A549 (cell line): ENCODE measurements at regions of chr12 and their contacts with region 1.

Region 1: GRCh38 chr12:49069507-49070346 is at the start of gene RHEBL1:
- DNase-seq: peak; percentile 97 to 98
- ATAC-seq: peak; percentile 97 to 99
- H3K4me3 ChIP-seq: peak within 1 kb of the TSS; percentile 55
- H3K27ac ChIP-seq: peak within 1 kb of the TSS; percentile 62 to 85
- H3K4me1 ChIP-seq: peaks cover 7% of the 10 kb centered on the region; the same call in 2 of the 3 replicates
- CTCF ChIP-seq: no peak
- EP300 ChIP-seq: no peak
- POLR2A ChIP-seq: no peak
- RAD21 ChIP-seq: no peak
- polyA plus RNA-seq, gene RHEBL1: 4.0 TPM in 2 replicates

Region 2: DNA sequence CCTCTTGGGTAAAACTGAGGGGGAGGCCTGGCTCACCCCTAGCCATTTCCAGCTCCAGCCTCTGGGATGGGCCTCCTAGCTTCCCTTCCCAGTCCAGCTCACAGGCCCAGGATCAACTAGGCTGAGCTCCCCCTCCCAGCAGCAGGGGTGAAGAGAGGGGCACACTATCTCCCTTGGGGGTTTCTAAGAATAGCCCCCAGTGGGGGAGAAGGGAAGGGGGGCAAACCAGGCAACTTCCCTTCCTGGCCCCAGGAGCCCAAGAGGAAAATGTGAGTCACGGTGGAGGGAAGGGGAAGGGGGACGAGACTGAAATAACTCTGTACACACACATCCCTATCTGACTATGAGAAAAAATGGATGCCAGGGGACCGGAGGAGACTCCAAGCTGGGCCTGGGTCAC is 289.9 kb before region 1 on chr12:
- CTCF ChIA-PET with region 1: no interaction called
- POLR2A ChIA-PET with region 1: no interaction called
- DNase-seq: no peak
- ATAC-seq: no peak
- H3K4me3 ChIP-seq: no peak overlapping the region
- H3K27ac ChIP-seq: no peak overlapping the region
- H3K4me1 ChIP-seq: no peaks in the 10 kb centered on the region
- CTCF ChIP-seq: no peak
- EP300 ChIP-seq: no peak
- POLR2A ChIP-seq: no peak
- RAD21 ChIP-seq: no peak

Region 3: DNA sequence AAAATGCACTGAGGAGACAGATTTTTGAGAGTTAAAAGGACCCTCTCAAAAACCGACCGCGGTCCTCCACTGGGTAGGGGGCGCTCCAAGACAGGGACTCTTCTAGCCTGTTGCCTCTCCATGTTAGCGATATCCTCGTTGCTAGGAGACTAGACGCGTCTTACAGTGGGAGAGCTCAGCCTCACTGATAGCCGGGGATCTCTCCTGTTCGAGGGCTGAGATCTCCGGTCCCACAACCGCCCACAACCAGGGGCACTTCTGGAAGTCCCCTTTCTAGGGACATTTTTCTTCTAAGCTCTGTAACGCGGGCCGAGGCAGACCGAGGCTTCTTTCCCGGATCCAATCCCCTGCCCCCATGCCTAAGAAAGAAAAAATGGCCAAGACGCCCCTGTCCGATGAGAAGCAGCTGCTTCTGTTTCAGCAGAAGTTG is 165.7 kb before region 1 on chr12:
- CTCF ChIA-PET with region 1: no interaction called
- POLR2A ChIA-PET with region 1: no interaction called
- DNase-seq: peak; percentile 92 to 93
- ATAC-seq: peak; percentile 96 to 98
- H3K4me3 ChIP-seq: peak overlapping the region; percentile 52
- H3K27ac ChIP-seq: peak overlapping the region in 1 of 2 experiments; percentile 72; a peak in 3 of 6 replicates
- H3K4me1 ChIP-seq: peaks cover 14% of the 10 kb centered on the region; the same call in 2 of the 3 replicates
- CTCF ChIP-seq: peak; percentile 90
- EP300 ChIP-seq: no peak
- POLR2A ChIP-seq: no peak
- RAD21 ChIP-seq: peak in 1 of 2 experiments; percentile 10; a peak in 1 of 5 replicates

Region 4: GRCh38 chr12:48988030-48988649 is 81.6 kb before region 1 on chr12:
- CTCF ChIA-PET with region 1: no interaction called
- POLR2A ChIA-PET with region 1: no interaction called
- DNase-seq: peak; percentile 66 to 68
- ATAC-seq: peak; percentile 64 to 87
- H3K4me3 ChIP-seq: no peak overlapping the region
- H3K27ac ChIP-seq: no peak overlapping the region
- H3K4me1 ChIP-seq: 0 out of 3 replicates have a peak, but pooled peaks cover 5% of the 10 kb centered on the region
- CTCF ChIP-seq: peak; percentile 80
- EP300 ChIP-seq: no peak
- POLR2A ChIP-seq: no peak
- RAD21 ChIP-seq: peak; percentile 15 to 44; a peak in 2 of 5 replicates

Region 5: GRCh38 chr12:49037111-49037946 is 32.4 kb before region 1 on chr12:
- CTCF ChIA-PET with region 1: interaction called, 16 read pairs
- POLR2A ChIA-PET with region 1: no interaction called
- DNase-seq: no peak
- ATAC-seq: no peak
- H3K4me3 ChIP-seq: no peak overlapping the region
- H3K27ac ChIP-seq: no peak overlapping the region
- H3K4me1 ChIP-seq: no peaks in the 10 kb centered on the region
- CTCF ChIP-seq: no peak
- EP300 ChIP-seq: no peak
- POLR2A ChIP-seq: no peak
- RAD21 ChIP-seq: no peak

Region 6: GRCh38 chr12:49049566-49050413 is 19.9 kb before region 1 on chr12:
- CTCF ChIA-PET with region 1: interaction called, 27 read pairs
- POLR2A ChIA-PET with region 1: interaction called, 5 read pairs
- DNase-seq: peak in 1 of 2 experiments; percentile 60
- ATAC-seq: peak; percentile 48 to 77; a peak in 3 of 6 replicates
- H3K4me3 ChIP-seq: no peak overlapping the region
- H3K27ac ChIP-seq: peak overlapping the region in 1 of 2 experiments; percentile 64; a peak in 2 of 6 replicates
- H3K4me1 ChIP-seq: peaks cover 15% of the 10 kb centered on the region
- CTCF ChIP-seq: no peak
- EP300 ChIP-seq: no peak
- POLR2A ChIP-seq: no peak
- RAD21 ChIP-seq: no peak

Region 7: GRCh38 chr12:49079793-49080192 is 10.1 kb after region 1 on chr12:
- CTCF ChIA-PET with region 1: interaction called, 33 read pairs
- POLR2A ChIA-PET with region 1: interaction called, 3 read pairs
- DNase-seq: no peak
- ATAC-seq: peak in 1 of 2 experiments; percentile 21; a peak in 1 of 6 replicates
- H3K4me3 ChIP-seq: no peak overlapping the region
- H3K27ac ChIP-seq: no peak overlapping the region
- H3K4me1 ChIP-seq: no peaks in the 10 kb centered on the region
- CTCF ChIP-seq: no peak
- EP300 ChIP-seq: no peak
- POLR2A ChIP-seq: no peak
- RAD21 ChIP-seq: no peak

Region 8: GRCh38 chr12:49098035-49098451 is 28.3 kb after region 1 on chr12:
- CTCF ChIA-PET with region 1: interaction called, 166 read pairs
- POLR2A ChIA-PET with region 1: no interaction called
- DNase-seq: peak; percentile 65 to 74
- ATAC-seq: peak; percentile 41 to 76; a peak in 4 of 6 replicates
- H3K4me3 ChIP-seq: no peak overlapping the region
- H3K27ac ChIP-seq: no peak overlapping the region
- H3K4me1 ChIP-seq: 0 out of 3 replicates have a peak, but pooled peaks cover 5% of the 10 kb centered on the region
- CTCF ChIP-seq: peak; percentile 69
- EP300 ChIP-seq: no peak
- POLR2A ChIP-seq: no peak
- RAD21 ChIP-seq: peak; percentile 36 to 49; a peak in 4 of 5 replicates

Region 9: GRCh38 chr12:49121047-49121696 is 51.4 kb after region 1 on chr12:
- CTCF ChIA-PET with region 1: interaction called, 78 read pairs
- POLR2A ChIA-PET with region 1: no interaction called
- DNase-seq: peak; percentile 86 to 91
- ATAC-seq: peak; percentile 84 to 94
- H3K4me3 ChIP-seq: no peak overlapping the region
- H3K27ac ChIP-seq: peak overlapping the region in 1 of 2 experiments; percentile 42; a peak in 2 of 6 replicates
- H3K4me1 ChIP-seq: no peaks in the 10 kb centered on the region
- CTCF ChIP-seq: peak; percentile 75
- EP300 ChIP-seq: no peak
- POLR2A ChIP-seq: no peak
- RAD21 ChIP-seq: peak; percentile 77 to 87